Naive thymus-derived CD4-positive, alpha-beta T cell (primary cell): ENCODE measurements at regions of chr6 and their contacts with region 1.

Region 1: DNA sequence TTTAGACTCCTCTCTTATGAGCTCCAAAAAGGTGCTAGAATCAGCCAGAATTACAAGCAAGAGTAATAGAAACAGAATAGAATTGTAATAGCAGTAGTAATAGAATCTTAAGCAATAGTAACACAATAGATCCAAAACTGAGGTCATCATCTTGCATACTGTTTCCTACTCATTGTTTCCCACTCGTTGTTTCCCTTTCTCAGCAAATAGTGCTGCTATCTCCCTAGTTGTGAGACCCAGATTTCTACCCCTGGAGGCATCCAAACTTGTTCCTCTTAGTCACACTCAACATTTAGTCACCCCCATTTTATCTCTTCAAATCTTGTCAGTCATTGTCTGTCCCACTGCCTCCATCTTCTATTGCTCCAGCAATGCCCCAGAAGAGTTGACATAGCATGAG is 356.9 kb upstream of the MARCKS start:
- DNase-seq: no peak
- ATAC-seq: no peak
- H3K4me3 ChIP-seq: no peak overlapping the region
- H3K4me3 Mint-ChIP-seq: no peak overlapping the region
- H3K27ac ChIP-seq: no peak overlapping the region
- H3K27ac Mint-ChIP-seq: no peak overlapping the region
- H3K4me1 ChIP-seq: no peaks in the 10 kb centered on the region
- H3K4me1 Mint-ChIP-seq: no peaks in the 10 kb centered on the region
- H3K27me3 ChIP-seq: no peaks in the 10 kb centered on the region
- H3K27me3 Mint-ChIP-seq: peaks cover 0 to 5% (median 0%) of the 10 kb centered on the region in 5 donors

Region 2: DNA sequence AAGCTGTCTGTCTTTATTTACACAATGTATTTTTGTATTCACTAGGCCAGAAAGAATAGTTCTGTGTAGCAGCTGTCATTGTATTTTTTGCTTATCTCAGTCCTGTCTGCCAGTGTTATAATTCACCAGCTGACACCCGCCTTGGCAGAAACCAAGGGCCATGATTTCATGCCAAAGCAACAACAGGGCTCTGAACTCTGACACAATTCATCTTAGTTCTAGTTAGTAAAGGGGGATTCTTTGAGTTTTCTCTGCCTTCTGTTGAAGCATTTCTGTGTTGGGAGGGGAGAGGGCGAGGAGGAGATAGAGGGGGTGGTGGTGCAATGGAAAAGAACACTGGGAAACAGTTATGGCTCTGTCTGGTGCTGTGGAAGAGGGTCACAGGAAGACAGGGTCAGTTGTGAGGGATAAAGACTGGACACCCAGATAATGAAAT is 327.7 kb before region 1 on chr6:
- CTCF ChIA-PET with region 1: interaction called, 10 read pairs
- POLR2A ChIA-PET with region 1: no interaction called
- intact Hi-C with region 1: no loop called
- DNase-seq: no peak
- ATAC-seq: no peak
- H3K4me3 ChIP-seq: no peak overlapping the region
- H3K4me3 Mint-ChIP-seq: no peak overlapping the region
- H3K27ac ChIP-seq: no peak overlapping the region
- H3K27ac Mint-ChIP-seq: no peak overlapping the region
- H3K4me1 ChIP-seq: no peaks in the 10 kb centered on the region
- H3K4me1 Mint-ChIP-seq: peaks cover 0 to 1% (median 0%) of the 10 kb centered on the region in 7 donors
- H3K27me3 ChIP-seq: no peaks in the 10 kb centered on the region
- H3K27me3 Mint-ChIP-seq: no peaks in the 10 kb centered on the region